MCF 10A (cell line): ENCODE measurements at regions of chr10 and their contacts with region 1.

Region 1: DNA sequence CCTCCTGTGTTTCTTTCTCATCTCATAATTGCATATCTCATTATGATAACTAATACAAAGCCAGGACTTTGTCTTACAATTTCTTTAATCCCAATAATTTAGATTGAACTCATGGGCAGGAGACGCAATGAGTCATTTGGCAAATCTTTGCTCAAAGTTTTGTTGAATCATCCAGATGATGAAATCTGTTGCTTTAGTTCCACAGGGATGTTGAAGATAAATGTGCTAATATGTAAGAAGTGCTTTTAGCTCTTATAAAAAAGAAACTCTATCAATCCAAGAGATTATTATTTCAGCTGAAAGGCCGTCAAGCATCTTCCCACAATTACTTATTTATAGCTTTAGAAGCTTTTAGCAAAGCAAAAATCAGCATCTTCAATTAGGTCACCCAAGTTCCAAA is 36.7 kb upstream of the ANK3 start:
- DNase-seq: peak; percentile 83
- H3K4me3 Mint-ChIP-seq: no peak overlapping the region
- H3K27ac Mint-ChIP-seq: peak overlapping the region; percentile 81
- H3K4me1 Mint-ChIP-seq: peaks cover 57% of the 10 kb centered on the region
- H3K27me3 Mint-ChIP-seq: no peaks in the 10 kb centered on the region
- CTCF ChIP-seq: no peak

Region 2: GRCh38 chr10:60237977-60238758 is 188.2 kb before region 1 on chr10:
- CTCF ChIA-PET with region 1: interaction called, 28 read pairs
- POLR2A ChIA-PET with region 1: no interaction called
- intact Hi-C with region 1: no loop called
- DNase-seq: peak; percentile 52
- H3K4me3 Mint-ChIP-seq: no peak overlapping the region
- H3K27ac Mint-ChIP-seq: no peak overlapping the region
- H3K4me1 Mint-ChIP-seq: no peaks in the 10 kb centered on the region
- H3K27me3 Mint-ChIP-seq: no peaks in the 10 kb centered on the region
- CTCF ChIP-seq: no peak

Region 3: DNA sequence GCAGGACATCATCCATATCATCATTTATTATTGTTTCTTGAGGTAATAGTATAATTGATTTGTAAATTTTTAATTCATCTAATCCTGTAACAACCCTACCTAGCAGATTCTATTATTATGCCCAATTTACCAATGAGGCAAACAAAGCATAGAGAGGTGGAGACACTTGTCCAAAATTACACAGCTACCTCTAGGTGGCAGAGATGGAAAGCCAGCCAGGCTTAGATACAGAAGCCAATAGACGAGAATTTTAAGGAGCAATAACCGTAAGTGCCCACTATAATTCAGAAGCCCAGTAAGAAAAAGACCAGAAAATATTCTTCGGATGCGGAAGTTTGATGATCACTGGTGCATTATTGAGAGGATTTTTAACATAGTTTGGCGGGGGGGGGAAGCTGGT is 90.7 kb before region 1 on chr10:
- CTCF ChIA-PET with region 1: interaction called, 11 read pairs
- POLR2A ChIA-PET with region 1: interaction called, 7 read pairs
- intact Hi-C with region 1: no loop called
- DNase-seq: peak; percentile 47
- H3K4me3 Mint-ChIP-seq: no peak overlapping the region
- H3K27ac Mint-ChIP-seq: peak overlapping the region; percentile 10
- H3K4me1 Mint-ChIP-seq: no peaks in the 10 kb centered on the region
- H3K27me3 Mint-ChIP-seq: no peaks in the 10 kb centered on the region
- CTCF ChIP-seq: peak; percentile 36

Region 4: GRCh38 chr10:60399328-60399727 is 27.1 kb before region 1 on chr10:
- CTCF ChIA-PET with region 1: interaction called, 3 read pairs
- POLR2A ChIA-PET with region 1: interaction called, 10 read pairs
- intact Hi-C with region 1: no loop called
- DNase-seq: no peak
- H3K4me3 Mint-ChIP-seq: no peak overlapping the region
- H3K27ac Mint-ChIP-seq: no peak overlapping the region
- H3K4me1 Mint-ChIP-seq: peaks cover 13% of the 10 kb centered on the region
- H3K27me3 Mint-ChIP-seq: no peaks in the 10 kb centered on the region
- CTCF ChIP-seq: no peak

Region 5: GRCh38 chr10:60414805-60415585 is 11.4 kb before region 1 on chr10:
- CTCF ChIA-PET with region 1: interaction called, 3 read pairs
- POLR2A ChIA-PET with region 1: interaction called, 10 read pairs
- intact Hi-C with region 1: loop called (anchors 1 kb)
- DNase-seq: peak; percentile 68
- H3K4me3 Mint-ChIP-seq: peak overlapping the region; percentile 7
- H3K27ac Mint-ChIP-seq: peak overlapping the region; percentile 22
- H3K4me1 Mint-ChIP-seq: peaks cover 37% of the 10 kb centered on the region
- H3K27me3 Mint-ChIP-seq: no peaks in the 10 kb centered on the region
- CTCF ChIP-seq: no peak

Region 6: DNA sequence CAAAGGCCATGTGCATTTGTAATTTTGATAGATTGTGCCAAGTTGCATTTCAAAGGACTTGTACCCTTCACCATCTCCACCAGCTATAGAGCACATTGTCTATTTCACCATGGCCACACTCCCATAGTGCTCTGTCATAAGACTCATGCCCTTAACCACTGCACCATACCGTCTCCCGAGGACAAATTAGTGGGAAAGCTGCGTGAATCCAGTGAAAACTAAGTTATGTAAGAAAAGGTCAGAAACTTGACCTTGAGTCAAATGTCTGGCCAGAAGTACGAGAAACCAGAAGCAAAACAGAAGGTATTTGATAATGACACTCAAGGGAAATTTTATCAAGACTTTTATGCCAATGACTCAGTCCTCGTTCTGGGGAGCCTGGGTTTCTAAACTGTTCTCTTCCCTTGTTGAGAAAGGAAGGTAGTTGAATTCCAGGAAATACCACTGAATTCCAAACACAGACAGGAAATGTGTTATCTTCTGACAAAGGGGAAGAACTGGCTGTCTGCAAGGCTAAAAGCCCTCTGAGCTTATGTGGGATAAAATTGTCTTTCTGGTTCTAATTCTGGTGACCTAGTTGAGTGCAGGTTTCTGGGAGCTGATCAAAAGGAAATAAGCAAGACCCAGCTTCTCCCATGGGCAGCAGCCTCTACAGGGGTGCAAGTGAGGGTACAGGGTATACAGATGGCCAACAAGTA is 401.5 kb after region 1 on chr10:
- CTCF ChIA-PET with region 1: no interaction called
- POLR2A ChIA-PET with region 1: no interaction called
- intact Hi-C with region 1: no loop called
- DNase-seq: peak; percentile 42
- H3K4me3 Mint-ChIP-seq: no peak overlapping the region
- H3K27ac Mint-ChIP-seq: no peak overlapping the region
- H3K4me1 Mint-ChIP-seq: peaks cover 17% of the 10 kb centered on the region
- H3K27me3 Mint-ChIP-seq: no peaks in the 10 kb centered on the region
- CTCF ChIP-seq: no peak